Endothelial cell of umbilical vein (primary cell): ENCODE measurements at regions of chr1 and their contacts with region 1.

Region 1: DNA sequence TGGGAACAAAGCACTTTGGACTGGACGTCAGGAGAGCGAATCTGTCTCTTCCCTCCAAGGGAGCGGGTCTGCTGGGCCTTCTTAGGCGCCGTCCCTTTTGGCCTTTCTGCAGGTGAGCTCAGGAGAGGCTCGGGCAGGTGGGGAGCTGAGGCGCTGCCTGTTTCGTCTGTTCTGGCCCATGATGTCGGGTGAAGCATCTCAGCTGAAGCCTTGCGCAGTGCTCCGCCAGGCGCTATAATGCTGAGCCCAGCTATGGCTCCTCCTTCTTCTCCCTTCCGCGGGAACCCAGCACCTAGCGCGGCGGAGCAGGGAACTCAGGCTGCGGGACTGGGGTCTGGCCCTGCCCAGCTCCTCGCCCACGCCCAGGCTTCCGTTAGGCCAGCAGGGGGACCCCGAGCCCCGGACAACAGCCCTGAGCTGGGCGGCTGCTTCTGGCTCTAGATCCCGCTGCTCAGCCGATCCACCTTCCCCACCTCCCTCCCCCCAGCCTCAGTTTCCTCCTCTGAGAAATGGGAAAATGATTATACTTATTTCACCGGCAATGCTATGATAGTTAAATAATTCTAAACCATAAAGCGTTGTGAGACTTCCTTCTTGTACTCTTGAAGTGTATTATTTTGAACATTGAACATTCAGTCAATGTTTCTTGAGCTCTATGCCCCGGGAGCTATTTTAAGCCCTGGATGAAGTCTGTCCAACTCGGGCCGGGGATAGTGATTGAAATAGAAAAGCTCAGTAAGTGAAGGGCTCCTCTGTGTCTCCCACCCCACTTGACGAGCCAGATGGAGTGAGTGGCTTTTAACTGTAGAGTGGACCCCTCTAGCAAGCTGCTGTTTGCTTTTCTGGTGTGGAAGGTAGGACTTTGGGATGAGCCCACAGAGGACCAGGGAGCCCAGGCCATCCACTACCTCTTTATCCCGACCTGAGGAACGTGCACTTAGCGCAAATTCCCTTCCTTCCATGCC is 9.6 kb upstream of the ADORA1 start:
- DNase-seq: peak; percentile 51
- H3K4me3 ChIP-seq: no peak overlapping the region
- H3K27ac ChIP-seq: no peak overlapping the region
- H3K4me1 ChIP-seq: no peaks in the 10 kb centered on the region
- H3K27me3 ChIP-seq: peaks cover 19 to 29% of the 10 kb centered on the region in 2 experiments
- CTCF ChIP-seq: peak; percentile 70 to 95
- POLR2A ChIP-seq: no peak

Region 2: GRCh38 chr1:203096566-203096965 is 21.3 kb before region 1 on chr1:
- CTCF ChIA-PET with region 1: interaction called, 14 read pairs
- POLR2A ChIA-PET with region 1: no interaction called
- dilution Hi-C with region 1: no loop called
- intact Hi-C with region 1: no loop called
- DNase-seq: no peak
- H3K4me3 ChIP-seq: no peak overlapping the region
- H3K27ac ChIP-seq: no peak overlapping the region
- H3K4me1 ChIP-seq: no peaks in the 10 kb centered on the region
- H3K27me3 ChIP-seq: peaks cover 2 to 21% of the 10 kb centered on the region in 2 experiments
- CTCF ChIP-seq: no peak
- POLR2A ChIP-seq: no peak

Region 3: DNA sequence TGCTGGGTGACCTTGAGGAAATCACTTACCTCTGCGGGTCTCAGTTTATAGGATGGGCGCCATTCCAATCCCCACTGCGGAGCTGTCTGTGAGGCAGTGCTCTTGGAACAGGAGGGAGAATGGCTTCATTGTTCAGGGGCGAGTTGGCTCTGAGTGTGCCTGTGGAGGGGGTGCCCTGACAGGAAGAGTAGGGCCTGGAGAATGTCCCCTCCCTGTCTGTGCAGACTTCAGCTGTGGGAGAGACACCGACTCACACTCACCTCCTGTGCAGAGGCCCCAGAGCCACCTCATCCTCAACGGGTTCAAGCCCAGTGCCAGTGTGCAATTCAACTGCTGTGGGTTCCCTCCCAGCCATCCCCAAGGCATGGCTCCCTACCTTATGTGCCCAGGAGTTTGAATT is 26.8 kb after region 1 on chr1:
- CTCF ChIA-PET with region 1: interaction called, 11 read pairs
- POLR2A ChIA-PET with region 1: no interaction called
- dilution Hi-C with region 1: no loop called
- intact Hi-C with region 1: no loop called
- DNase-seq: no peak
- H3K4me3 ChIP-seq: no peak overlapping the region
- H3K27ac ChIP-seq: no peak overlapping the region
- H3K4me1 ChIP-seq: no peaks in the 10 kb centered on the region
- H3K27me3 ChIP-seq: peaks cover 2 to 20% of the 10 kb centered on the region in 2 experiments
- CTCF ChIP-seq: no peak
- POLR2A ChIP-seq: no peak

Region 4: DNA sequence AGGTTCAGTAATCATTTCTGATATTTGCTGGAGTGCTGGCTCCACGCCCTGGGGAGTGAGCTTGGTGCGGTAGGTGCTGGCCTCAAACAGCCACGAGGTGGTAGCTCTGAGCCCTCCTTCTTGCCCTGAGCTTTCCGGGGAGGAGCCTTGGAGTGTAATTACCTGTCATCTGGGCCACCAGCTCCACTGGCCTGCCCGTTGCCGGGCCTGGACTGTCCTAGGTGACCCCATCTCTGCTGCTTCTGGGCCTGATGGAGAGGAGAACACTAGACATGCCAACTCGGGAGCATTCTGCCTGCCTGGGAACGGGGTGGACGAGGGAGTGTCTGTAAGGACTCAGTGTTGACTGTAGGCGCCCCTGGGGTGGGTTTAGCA is 48.7 kb after region 1 on chr1:
- CTCF ChIA-PET with region 1: interaction called, 317 read pairs
- POLR2A ChIA-PET with region 1: no interaction called
- dilution Hi-C with region 1: no loop called
- intact Hi-C with region 1: no loop called
- DNase-seq: no peak
- H3K4me3 ChIP-seq: no peak overlapping the region
- H3K27ac ChIP-seq: no peak overlapping the region
- H3K4me1 ChIP-seq: no peaks in the 10 kb centered on the region
- H3K27me3 ChIP-seq: peaks cover 0 to 10% of the 10 kb centered on the region in 2 experiments
- CTCF ChIP-seq: no peak
- POLR2A ChIP-seq: no peak

Region 5: GRCh38 chr1:203206129-203206687 is 88.3 kb after region 1 on chr1:
- CTCF ChIA-PET with region 1: interaction called, 16 read pairs
- POLR2A ChIA-PET with region 1: no interaction called
- dilution Hi-C with region 1: no loop called
- intact Hi-C with region 1: no loop called
- DNase-seq: peak; percentile 13
- H3K4me3 ChIP-seq: no peak overlapping the region
- H3K27ac ChIP-seq: no peak overlapping the region
- H3K4me1 ChIP-seq: no peaks in the 10 kb centered on the region
- H3K27me3 ChIP-seq: peaks cover 2 to 14% of the 10 kb centered on the region in 2 experiments
- CTCF ChIP-seq: no peak
- POLR2A ChIP-seq: no peak